ENCODE measurements at regions of chr6 and their contacts with region 1.

Region 1: GRCh38 chr6:28335564-28336283 is at the start of gene ZSCAN31:
- H3K4me3 ChIP-seq: peak within 1 kb of the TSS; percentile 78
- H3K27ac ChIP-seq: peak within 1 kb of the TSS; percentile 88
- H3K4me1 ChIP-seq: peaks cover 4% of the 10 kb centered on the region; the same call in 1 of the 2 replicates
- CTCF ChIP-seq: no peak

Region 2: DNA sequence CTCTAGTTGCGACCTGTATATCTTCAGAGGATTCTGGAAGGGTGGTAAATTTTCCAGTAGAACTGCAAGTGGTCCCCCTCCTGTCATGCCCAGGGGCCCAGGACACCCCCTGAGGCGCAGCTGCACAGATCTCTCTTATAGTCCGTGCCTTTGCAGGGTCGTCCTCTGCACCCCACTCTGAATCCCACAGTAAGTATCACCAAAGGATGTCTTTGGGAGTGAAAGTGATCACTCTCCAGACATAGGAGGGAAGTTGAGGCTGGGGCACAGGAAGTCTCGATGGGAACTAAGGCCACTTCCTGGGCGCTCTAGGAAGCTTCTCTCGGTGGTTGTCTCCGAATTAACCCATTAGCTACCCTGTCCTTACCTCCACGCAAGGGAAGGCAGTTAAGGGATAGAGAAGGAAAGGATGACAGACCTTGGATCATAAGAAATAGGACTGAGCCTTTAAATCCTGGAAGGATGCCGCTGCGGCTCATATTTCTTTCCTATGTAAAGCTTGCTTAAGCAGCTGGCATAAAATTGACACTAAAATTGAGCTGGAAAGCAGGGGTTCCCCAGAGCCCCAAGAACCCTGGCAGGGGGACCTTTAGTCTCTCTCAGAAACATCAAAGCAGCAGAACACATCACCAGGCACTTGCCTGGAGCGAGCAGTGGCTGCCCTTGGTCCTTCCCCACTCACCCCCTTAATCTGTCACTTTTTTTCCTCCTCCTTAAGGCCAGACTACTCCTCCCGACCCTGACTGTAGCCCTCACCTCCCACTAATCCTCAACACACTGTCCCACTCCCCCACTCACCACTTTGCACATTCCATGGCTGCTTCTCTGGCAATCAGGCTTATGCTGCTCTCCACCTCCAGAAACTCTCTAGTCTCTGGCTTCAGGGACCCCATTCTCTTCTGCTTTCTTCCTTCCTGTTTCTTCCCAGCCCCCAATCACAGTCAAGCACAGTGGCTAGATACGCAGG is 83.4 kb before region 1 on chr6 and contains the start of gene ZKSCAN4:
- CTCF ChIA-PET with region 1: no interaction called
- POLR2A ChIA-PET with region 1: interaction called, 17 read pairs
- H3K4me3 ChIP-seq: peak within 1 kb of the TSS; percentile 74
- H3K27ac ChIP-seq: peak within 1 kb of the TSS; percentile 20; the same call in 1 of the 2 replicates
- H3K4me1 ChIP-seq: peaks cover 5% of the 10 kb centered on the region; the same call in 1 of the 2 replicates
- CTCF ChIP-seq: no peak

Region 3: DNA sequence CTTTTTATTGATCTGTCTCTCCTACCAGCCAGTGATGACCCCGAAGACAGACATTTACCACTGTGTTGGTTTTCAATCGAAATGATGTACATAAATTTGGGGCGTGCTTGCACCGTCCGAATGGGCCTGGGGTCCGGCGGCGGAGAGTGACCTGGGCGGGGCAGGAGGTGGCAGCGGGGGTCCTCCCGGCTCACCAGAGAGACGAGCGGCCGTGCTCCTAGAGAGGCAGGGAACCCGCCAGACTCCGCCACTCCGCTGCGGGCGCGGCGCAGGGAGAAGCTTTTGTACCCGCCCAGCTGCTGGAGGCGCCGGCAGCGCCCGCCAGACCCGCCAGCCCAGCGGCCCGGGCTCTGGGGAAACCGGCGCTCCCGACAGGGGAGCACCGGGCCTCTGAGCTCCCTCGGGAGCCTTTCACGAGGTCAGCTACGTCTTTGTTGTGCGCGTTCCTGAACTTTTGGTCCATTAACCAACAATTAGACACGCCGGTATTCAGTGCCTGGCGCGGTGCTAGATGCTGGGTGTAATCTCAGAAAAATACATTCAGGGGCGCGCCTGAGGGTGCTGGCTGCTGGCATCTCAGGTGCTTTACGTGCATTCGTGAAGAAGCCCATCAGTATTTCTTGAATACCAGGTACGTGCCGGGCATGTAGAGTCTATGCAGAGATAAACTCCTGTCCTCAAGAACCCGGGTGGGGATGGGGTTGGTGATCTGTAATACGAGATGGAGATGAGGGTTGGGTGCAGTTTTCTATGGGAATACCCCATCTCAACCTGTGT is 54.2 kb before region 1 on chr6 and contains the start of gene PGBD1:
- CTCF ChIA-PET with region 1: interaction called, 3 read pairs
- POLR2A ChIA-PET with region 1: interaction called, 22 read pairs
- H3K4me3 ChIP-seq: peak within 1 kb of the TSS; percentile 89
- H3K27ac ChIP-seq: peak within 1 kb of the TSS; percentile 65; the same call in 1 of the 2 replicates
- H3K4me1 ChIP-seq: no peaks in the 10 kb centered on the region
- CTCF ChIP-seq: 0 out of 2 replicates have a peak, but pooled peaks have one; percentile 25

Region 4: GRCh38 chr6:28311139-28311823 is 24.4 kb before region 1 on chr6:
- CTCF ChIA-PET with region 1: interaction called, 5 read pairs
- POLR2A ChIA-PET with region 1: interaction called, 17 read pairs
- H3K4me3 ChIP-seq: no peak overlapping the region
- H3K27ac ChIP-seq: peak overlapping the region; percentile 62
- H3K4me1 ChIP-seq: peaks cover 6% of the 10 kb centered on the region
- CTCF ChIP-seq: no peak

Region 5: DNA sequence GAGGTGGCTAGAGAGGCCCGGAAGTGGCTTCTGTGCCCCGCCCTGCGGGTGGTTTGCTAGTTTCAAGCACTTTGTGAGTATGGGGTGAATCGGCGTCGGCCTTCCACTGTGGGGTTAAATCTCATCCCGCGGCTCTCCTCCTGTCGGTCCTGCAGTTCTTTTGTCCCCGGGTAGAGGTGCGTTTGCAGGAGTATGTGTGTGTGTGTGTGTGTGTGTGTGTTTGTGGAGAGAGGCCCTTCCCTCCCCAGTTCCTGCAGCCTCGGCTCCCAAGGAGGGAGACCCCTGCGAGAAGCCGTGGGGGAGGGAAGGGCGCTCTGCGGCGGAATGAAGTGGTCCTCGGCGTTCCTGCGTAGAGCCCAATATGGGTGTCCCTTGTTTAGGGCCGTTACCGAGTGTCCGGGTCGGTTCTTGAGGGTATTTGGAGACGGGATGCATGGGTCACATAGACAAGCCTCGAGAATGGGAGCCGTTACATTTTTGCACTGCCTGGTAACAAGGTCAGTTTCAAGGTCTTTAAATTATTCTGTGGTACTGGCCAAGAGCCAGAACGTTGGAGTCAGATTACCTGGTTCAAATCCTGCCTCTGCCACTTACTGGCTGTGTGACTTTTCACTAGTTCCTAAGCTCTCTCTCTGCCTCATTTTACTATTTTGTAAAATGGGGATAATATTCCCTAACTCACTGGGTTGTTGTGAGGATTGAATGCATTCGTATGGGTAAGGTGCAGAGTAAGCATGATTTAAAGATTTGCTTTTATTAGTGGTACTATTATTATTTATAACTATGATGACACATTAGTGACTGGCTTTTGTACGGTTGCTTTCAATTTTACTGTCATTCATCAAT is 14.4 kb after region 1 on chr6 and contains the start of gene ZKSCAN3:
- CTCF ChIA-PET with region 1: interaction called, 7 read pairs
- POLR2A ChIA-PET with region 1: interaction called, 34 read pairs
- H3K4me3 ChIP-seq: peak within 1 kb of the TSS; percentile 52
- H3K27ac ChIP-seq: peak within 1 kb of the TSS; percentile 69
- H3K4me1 ChIP-seq: peaks cover 4% of the 10 kb centered on the region; the same call in 1 of the 2 replicates
- CTCF ChIP-seq: peak; percentile 58; the same call in 1 of the 2 replicates

Measured in HEK293 (cell line).